Common myeloid progenitor, CD34-positive (primary cell): ENCODE measurements at regions of chr5 and their contacts with region 1.

Region 1: GRCh38 chr5:178234750-178235587 is 2.4 kb upstream of the PHYKPL start:
- DNase-seq: peak; percentile 80 to 89 (median 88)
- H3K4me3 ChIP-seq: no peak overlapping the region
- H3K27ac ChIP-seq: no peak overlapping the region
- H3K4me1 ChIP-seq: peaks cover 12 to 93% (median 89%) of the 10 kb centered on the region in 4 experiments
- H3K27me3 ChIP-seq: no peaks in the 10 kb centered on the region

Region 2: GRCh38 chr5:178249191-178249989 is 14.4 kb after region 1 on chr5:
- CTCF ChIA-PET with region 1: interaction called, 53 read pairs
- POLR2A ChIA-PET with region 1: interaction called, 8 read pairs
- DNase-seq: peak; percentile 55 to 93 (median 84)
- H3K4me3 ChIP-seq: peak overlapping the region in 1 of 7 experiments; percentile 36
- H3K27ac ChIP-seq: no peak overlapping the region
- H3K4me1 ChIP-seq: peaks cover 0 to 68% (median 46%) of the 10 kb centered on the region in 4 experiments
- H3K27me3 ChIP-seq: no peaks in the 10 kb centered on the region